CD8-positive, alpha-beta T cell (primary cell): ENCODE measurements at regions of chr11 and their contacts with region 1.

Region 1: DNA sequence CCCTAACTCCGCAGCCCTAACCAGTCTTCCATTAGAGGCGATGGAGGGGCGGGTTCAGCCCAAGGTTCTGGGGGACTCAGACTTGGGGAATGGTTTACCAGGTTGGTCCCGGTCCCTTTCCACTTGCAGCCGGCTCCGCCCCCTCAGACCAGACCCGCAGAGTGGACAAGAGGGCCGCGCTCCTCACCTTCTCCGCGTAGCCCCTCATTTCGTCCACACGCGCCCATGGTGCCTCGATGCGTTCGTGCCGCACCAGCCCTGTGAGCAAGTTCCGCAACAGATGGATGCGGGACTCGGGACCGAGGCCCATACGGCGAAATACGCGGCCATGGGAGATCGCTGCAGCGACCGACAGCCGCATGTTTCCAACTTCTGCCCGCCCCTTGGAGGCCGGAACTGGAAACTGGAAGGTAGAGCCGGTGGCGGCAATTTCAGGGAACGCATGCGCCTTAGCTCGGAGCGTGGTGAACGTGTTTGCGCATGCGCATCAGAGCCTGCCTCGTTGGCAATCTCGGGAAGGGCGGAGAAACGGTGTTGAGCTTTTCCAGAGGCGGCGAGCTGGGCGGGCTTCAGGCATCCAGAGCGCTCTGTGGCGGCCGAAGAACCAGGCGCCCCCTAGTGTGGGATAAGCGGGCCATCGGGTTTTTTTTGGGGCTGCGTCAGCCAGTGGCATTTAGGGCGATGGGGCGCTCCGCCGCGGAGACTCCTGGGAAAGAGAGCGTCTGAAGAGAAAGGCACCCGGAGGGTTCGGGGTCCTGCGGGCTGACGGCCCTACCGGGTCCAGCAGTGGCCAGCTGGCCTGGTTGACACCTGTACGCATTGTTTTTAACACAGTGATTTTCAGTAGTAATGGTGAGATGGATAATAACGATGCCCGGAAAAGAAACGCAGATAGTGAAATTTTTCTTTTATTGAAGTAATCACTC is at the start of gene MRPL17:
- DNase-seq: peak; percentile 97 to 100 (median 99)
- ATAC-seq: peak; percentile 95
- H3K4me3 ChIP-seq: peak within 1 kb of the TSS; percentile 87 to 94
- H3K4me3 Mint-ChIP-seq: peak within 1 kb of the TSS; percentile 99
- H3K27ac ChIP-seq: peak within 1 kb of the TSS; percentile 81 to 84
- H3K27ac Mint-ChIP-seq: peak within 1 kb of the TSS; percentile 99
- H3K4me1 ChIP-seq: peaks cover 20% of the 10 kb centered on the region
- H3K4me1 Mint-ChIP-seq: peaks cover 38% of the 10 kb centered on the region
- H3K27me3 ChIP-seq: no peaks in the 10 kb centered on the region
- H3K27me3 Mint-ChIP-seq: no peaks in the 10 kb centered on the region
- CTCF ChIP-seq: peak; percentile 87
- total RNA-seq, gene MRPL17: 11.2 to 12.0 TPM

Region 2: DNA sequence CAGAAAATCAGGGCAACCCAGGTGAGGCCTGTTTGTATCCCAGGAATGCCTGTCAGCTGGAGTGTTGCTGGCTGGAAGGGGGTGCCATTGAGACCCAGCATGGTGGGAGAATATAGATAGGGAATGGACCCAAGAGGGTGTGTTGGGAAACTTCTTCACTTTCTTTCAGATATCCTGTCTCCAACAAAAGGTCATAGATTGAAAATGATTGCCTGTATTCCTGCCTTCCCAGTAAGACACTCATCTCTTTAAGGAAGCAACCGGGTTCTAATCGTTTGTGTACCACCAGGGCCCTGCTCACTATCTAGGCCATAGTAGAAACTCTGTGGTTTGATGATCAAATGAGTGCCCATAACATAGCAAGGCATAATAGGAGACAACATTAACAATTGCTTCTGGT is 1241.8 kb before region 1 on chr11 and contains the start of gene OR51I1:
- CTCF ChIA-PET with region 1: no interaction called
- POLR2A ChIA-PET with region 1: no interaction called
- intact Hi-C with region 1: no loop called
- DNase-seq: no peak
- ATAC-seq: no peak
- H3K4me3 ChIP-seq: no peak within 1 kb of the TSS
- H3K4me3 Mint-ChIP-seq: no peak within 1 kb of the TSS
- H3K27ac ChIP-seq: no peak within 1 kb of the TSS
- H3K27ac Mint-ChIP-seq: no peak within 1 kb of the TSS
- H3K4me1 ChIP-seq: no peaks in the 10 kb centered on the region
- H3K4me1 Mint-ChIP-seq: no peaks in the 10 kb centered on the region
- H3K27me3 ChIP-seq: peaks cover 0 to 2% of the 10 kb centered on the region in 2 experiments
- H3K27me3 Mint-ChIP-seq: peaks cover 10% of the 10 kb centered on the region
- CTCF ChIP-seq: no peak
- total RNA-seq, gene OR51I1: not detected

Region 3: DNA sequence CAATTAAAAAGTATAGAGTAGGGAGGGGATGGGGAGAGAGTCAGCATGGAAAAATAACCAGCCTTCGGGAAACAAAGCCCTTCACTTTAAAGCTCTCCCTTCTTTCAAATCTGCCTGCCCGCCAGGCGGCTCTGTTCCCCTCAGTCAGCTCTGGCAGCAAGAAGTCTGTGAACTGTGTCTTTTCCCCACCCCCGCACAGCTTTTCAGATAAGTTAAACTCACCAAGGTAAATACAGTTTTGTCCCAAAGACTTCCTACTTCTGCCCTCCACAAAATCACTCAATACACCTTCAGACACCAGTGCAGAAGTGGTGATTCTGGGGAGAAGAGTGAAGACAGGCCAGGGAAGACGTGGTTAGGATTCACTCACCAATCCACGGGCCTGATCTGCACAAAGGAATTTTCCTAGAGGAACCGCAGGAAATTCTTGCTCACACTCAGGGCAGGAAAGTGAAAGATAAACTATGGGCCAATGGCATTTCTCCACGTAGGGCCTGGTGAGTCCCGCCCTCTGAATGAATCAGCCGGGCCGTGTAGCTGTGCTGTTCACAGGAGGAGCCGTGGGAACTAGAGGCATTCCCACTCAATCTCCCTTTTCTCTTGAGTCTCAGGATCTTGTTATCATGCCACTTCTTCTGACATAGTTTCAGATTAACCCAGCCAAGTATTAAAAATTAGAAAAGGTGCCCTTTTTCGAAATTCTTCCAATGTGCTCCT is 998.4 kb before region 1 on chr11 and contains the start of gene TRIM5:
- CTCF ChIA-PET with region 1: no interaction called
- POLR2A ChIA-PET with region 1: no interaction called
- intact Hi-C with region 1: no loop called
- DNase-seq: peak; percentile 55 to 93 (median 79)
- ATAC-seq: peak; percentile 86
- H3K4me3 ChIP-seq: peak within 1 kb of the TSS; percentile 73 to 93
- H3K4me3 Mint-ChIP-seq: peak within 1 kb of the TSS; percentile 93
- H3K27ac ChIP-seq: peak within 1 kb of the TSS; percentile 74 to 92
- H3K27ac Mint-ChIP-seq: peak within 1 kb of the TSS; percentile 95
- H3K4me1 ChIP-seq: peaks cover 19% of the 10 kb centered on the region
- H3K4me1 Mint-ChIP-seq: peaks cover 67% of the 10 kb centered on the region
- H3K27me3 ChIP-seq: no peaks in the 10 kb centered on the region
- H3K27me3 Mint-ChIP-seq: no peaks in the 10 kb centered on the region
- CTCF ChIP-seq: peak; percentile 79
- total RNA-seq, gene TRIM5: 3.8 to 6.0 TPM

Region 4: GRCh38 chr11:6234387-6235107 is 448.7 kb before region 1 on chr11 and contains the start of gene FHIP1B:
- CTCF ChIA-PET with region 1: no interaction called
- POLR2A ChIA-PET with region 1: no interaction called
- intact Hi-C with region 1: loop called (anchors 1 to 10 kb)
- DNase-seq: peak; percentile 98 to 100 (median 99)
- ATAC-seq: peak; percentile 91
- H3K4me3 ChIP-seq: peak within 1 kb of the TSS; percentile 85 to 89
- H3K4me3 Mint-ChIP-seq: peak within 1 kb of the TSS; percentile 98
- H3K27ac ChIP-seq: peak within 1 kb of the TSS; percentile 76 to 88
- H3K27ac Mint-ChIP-seq: peak within 1 kb of the TSS; percentile 96
- H3K4me1 ChIP-seq: peaks cover 21% of the 10 kb centered on the region
- H3K4me1 Mint-ChIP-seq: peaks cover 45% of the 10 kb centered on the region
- H3K27me3 ChIP-seq: no peaks in the 10 kb centered on the region
- H3K27me3 Mint-ChIP-seq: no peaks in the 10 kb centered on the region
- CTCF ChIP-seq: no peak
- total RNA-seq, gene FHIP1B: 38.3 to 38.6 TPM

Region 5: GRCh38 chr11:6531267-6531752 is 151.9 kb before region 1 on chr11:
- CTCF ChIA-PET with region 1: interaction called, 25 read pairs
- POLR2A ChIA-PET with region 1: interaction called, 6 read pairs
- intact Hi-C with region 1: loop called (anchors 1 kb)
- DNase-seq: peak in 3 of 9 experiments; percentile 14 to 68 (median 56)
- ATAC-seq: peak; percentile 83
- H3K4me3 ChIP-seq: no peak overlapping the region
- H3K4me3 Mint-ChIP-seq: no peak overlapping the region
- H3K27ac ChIP-seq: no peak overlapping the region
- H3K27ac Mint-ChIP-seq: no peak overlapping the region
- H3K4me1 ChIP-seq: peaks cover 4% of the 10 kb centered on the region
- H3K4me1 Mint-ChIP-seq: peaks cover 7% of the 10 kb centered on the region
- H3K27me3 ChIP-seq: no peaks in the 10 kb centered on the region
- H3K27me3 Mint-ChIP-seq: no peaks in the 10 kb centered on the region
- CTCF ChIP-seq: peak; percentile 84

Region 6: DNA sequence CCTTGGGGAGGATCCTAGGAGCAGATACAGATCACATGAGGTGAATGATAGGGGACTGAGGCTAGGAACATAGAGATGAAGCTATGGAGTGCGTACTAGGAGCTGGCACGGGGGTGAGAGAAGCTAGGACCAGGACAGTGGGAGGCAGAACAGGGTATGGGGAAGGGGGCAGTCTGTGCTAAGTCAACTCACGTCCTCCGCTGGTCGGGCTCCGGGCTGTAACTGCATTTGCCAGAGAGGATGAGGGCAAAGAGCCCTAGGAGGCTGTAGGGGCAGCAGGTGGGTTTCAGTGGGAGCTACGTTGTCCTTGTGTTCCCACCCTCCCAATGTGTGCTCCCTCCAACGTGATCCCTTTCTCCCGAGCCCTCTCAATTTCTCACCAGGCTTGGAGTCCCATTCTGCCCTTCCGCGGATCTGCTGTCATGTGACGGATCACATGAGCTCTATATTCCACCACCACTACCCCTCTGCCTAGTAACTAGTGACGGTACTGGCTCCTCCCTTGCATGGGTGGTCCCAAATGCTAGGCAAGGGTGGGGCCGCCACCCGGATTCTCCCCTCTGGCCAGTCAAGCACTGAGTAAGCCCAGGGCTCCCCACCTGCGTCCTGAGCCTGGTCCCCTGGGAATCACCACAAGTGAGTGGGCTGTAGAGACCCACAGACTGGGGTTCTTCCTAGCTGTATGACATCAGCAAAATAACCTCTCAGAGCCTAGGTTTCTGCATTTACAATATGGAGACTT is 64.0 kb before region 1 on chr11 and contains the start of gene TPP1:
- CTCF ChIA-PET with region 1: interaction called, 51 read pairs
- POLR2A ChIA-PET with region 1: interaction called, 97 read pairs
- intact Hi-C with region 1: loop called (anchors 1 kb)
- DNase-seq: peak; percentile 79 to 96 (median 89)
- ATAC-seq: peak; percentile 91
- H3K4me3 ChIP-seq: peak within 1 kb of the TSS; percentile 80 to 89
- H3K4me3 Mint-ChIP-seq: no peak within 1 kb of the TSS
- H3K27ac ChIP-seq: peak within 1 kb of the TSS; percentile 75 to 96
- H3K27ac Mint-ChIP-seq: no peak within 1 kb of the TSS
- H3K4me1 ChIP-seq: peaks cover 23% of the 10 kb centered on the region
- H3K4me1 Mint-ChIP-seq: peaks cover 9% of the 10 kb centered on the region
- H3K27me3 ChIP-seq: no peaks in the 10 kb centered on the region
- H3K27me3 Mint-ChIP-seq: no peaks in the 10 kb centered on the region
- CTCF ChIP-seq: no peak
- total RNA-seq, gene TPP1: 31.1 to 34.8 TPM

Region 7: GRCh38 chr11:6667733-6668374 is 15.3 kb before region 1 on chr11:
- CTCF ChIA-PET with region 1: interaction called, 17 read pairs
- POLR2A ChIA-PET with region 1: interaction called, 30 read pairs
- intact Hi-C with region 1: loop called in 1 of 2 experiments (anchors 2 kb)
- DNase-seq: peak in 6 of 9 experiments; percentile 16 to 81 (median 50)
- ATAC-seq: peak; percentile 76
- H3K4me3 ChIP-seq: no peak overlapping the region
- H3K4me3 Mint-ChIP-seq: peak overlapping the region; percentile 13
- H3K27ac ChIP-seq: peak overlapping the region in 1 of 2 experiments; percentile 47
- H3K27ac Mint-ChIP-seq: peak overlapping the region; percentile 81
- H3K4me1 ChIP-seq: peaks cover 59% of the 10 kb centered on the region
- H3K4me1 Mint-ChIP-seq: peaks cover 66% of the 10 kb centered on the region
- H3K27me3 ChIP-seq: no peaks in the 10 kb centered on the region
- H3K27me3 Mint-ChIP-seq: no peaks in the 10 kb centered on the region
- CTCF ChIP-seq: peak; percentile 57

Region 8: DNA sequence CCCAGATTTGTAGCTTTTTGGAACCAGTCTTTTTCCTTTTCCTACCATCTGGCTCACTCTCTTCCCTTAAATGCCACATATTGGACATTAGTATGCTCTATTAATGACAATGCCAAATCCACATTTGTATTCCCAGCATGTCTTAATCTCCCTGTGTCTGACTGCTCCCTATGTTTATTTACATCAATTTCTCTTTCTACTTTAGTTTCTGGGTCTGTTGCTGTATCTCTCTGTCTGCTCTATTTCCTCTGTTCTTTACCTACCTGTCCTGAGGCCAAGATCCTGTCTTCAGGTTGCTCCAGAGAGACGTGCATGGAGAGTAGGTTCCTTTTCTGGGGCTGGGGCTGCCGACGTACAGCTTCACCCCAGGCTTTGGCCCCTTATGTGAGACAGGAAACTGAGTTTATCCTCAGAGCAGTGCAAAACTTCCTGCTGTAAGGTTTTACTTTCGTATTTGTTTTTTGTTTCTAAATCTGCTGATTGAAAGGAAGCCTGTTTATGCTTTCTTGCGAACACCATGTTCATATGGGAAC is 63.0 kb after region 1 on chr11:
- CTCF ChIA-PET with region 1: interaction called, 4 read pairs
- POLR2A ChIA-PET with region 1: interaction called, 12 read pairs
- intact Hi-C with region 1: loop called in 1 of 2 experiments (anchors 2 kb)
- DNase-seq: peak in 8 of 9 experiments; percentile 26 to 82 (median 55)
- ATAC-seq: peak; percentile 84
- H3K4me3 ChIP-seq: peak overlapping the region; percentile 61 to 65
- H3K4me3 Mint-ChIP-seq: no peak overlapping the region
- H3K27ac ChIP-seq: peak overlapping the region; percentile 69 to 89
- H3K27ac Mint-ChIP-seq: no peak overlapping the region
- H3K4me1 ChIP-seq: peaks cover 57% of the 10 kb centered on the region
- H3K4me1 Mint-ChIP-seq: peaks cover 46% of the 10 kb centered on the region
- H3K27me3 ChIP-seq: no peaks in the 10 kb centered on the region
- H3K27me3 Mint-ChIP-seq: no peaks in the 10 kb centered on the region
- CTCF ChIP-seq: no peak

Region 9: GRCh38 chr11:7208391-7208790 is 525.2 kb after region 1 on chr11:
- CTCF ChIA-PET with region 1: no interaction called
- POLR2A ChIA-PET with region 1: no interaction called
- intact Hi-C with region 1: no loop called
- DNase-seq: no peak
- ATAC-seq: no peak
- H3K4me3 ChIP-seq: no peak overlapping the region
- H3K4me3 Mint-ChIP-seq: no peak overlapping the region
- H3K27ac ChIP-seq: no peak overlapping the region
- H3K27ac Mint-ChIP-seq: no peak overlapping the region
- H3K4me1 ChIP-seq: no peaks in the 10 kb centered on the region
- H3K4me1 Mint-ChIP-seq: no peaks in the 10 kb centered on the region
- H3K27me3 ChIP-seq: no peaks in the 10 kb centered on the region
- H3K27me3 Mint-ChIP-seq: peaks cover 12% of the 10 kb centered on the region
- CTCF ChIP-seq: no peak